ENCODE measurements at regions of chr19 and their contacts with region 1.

Region 1: GRCh38 chr19:45643024-45643926 is 4.1 kb upstream of the EML2 start:
- DNase-seq: no peak
- H3K4me3 ChIP-seq: no peak overlapping the region
- H3K27me3 ChIP-seq: no peaks in the 10 kb centered on the region
- CTCF ChIP-seq: peak; percentile 99

Region 2: DNA sequence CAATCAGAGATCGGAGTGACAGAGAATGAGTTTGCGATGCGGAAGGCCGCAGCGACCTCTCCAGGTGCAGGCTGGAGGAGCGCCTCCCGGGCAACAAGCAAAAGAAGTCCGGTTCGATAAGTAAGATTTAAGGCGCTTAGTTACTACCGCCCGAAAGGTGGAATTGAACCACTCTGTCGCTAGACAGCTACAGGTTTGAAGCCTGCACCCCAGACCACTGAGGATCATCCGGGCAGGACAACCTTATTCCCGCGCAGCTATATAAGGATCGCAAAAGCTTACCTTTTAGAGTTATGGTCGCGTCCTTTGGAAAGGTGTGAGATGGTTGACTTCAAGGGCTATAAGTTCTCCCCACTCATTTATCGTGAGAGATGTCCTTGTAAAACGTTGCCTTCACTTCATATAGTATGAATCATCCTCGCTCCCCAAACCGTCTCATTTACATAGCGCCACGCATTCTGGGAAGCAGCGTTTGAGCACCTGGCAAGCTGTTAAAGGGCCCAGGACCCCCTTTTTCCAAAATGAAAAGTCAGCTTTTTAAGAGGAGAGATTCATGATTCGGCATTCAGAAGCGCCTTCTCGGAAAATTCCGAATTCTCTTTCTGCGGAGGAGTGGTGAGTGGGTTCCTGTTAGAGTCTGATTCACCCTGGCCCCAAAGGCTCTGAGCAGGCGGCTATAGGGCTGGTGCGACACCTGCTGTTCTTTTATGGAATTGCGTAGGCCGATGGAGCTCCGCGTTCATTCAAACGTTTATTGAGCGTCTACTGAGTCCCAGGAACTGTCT is 164.6 kb before region 1 on chr19:
- CTCF ChIA-PET with region 1: interaction called, 24 read pairs
- POLR2A ChIA-PET with region 1: interaction called, 3 read pairs
- DNase-seq: no peak
- H3K4me3 ChIP-seq: peak overlapping the region; percentile 53
- H3K27me3 ChIP-seq: no peaks in the 10 kb centered on the region
- CTCF ChIP-seq: peak; percentile 93

Region 3: DNA sequence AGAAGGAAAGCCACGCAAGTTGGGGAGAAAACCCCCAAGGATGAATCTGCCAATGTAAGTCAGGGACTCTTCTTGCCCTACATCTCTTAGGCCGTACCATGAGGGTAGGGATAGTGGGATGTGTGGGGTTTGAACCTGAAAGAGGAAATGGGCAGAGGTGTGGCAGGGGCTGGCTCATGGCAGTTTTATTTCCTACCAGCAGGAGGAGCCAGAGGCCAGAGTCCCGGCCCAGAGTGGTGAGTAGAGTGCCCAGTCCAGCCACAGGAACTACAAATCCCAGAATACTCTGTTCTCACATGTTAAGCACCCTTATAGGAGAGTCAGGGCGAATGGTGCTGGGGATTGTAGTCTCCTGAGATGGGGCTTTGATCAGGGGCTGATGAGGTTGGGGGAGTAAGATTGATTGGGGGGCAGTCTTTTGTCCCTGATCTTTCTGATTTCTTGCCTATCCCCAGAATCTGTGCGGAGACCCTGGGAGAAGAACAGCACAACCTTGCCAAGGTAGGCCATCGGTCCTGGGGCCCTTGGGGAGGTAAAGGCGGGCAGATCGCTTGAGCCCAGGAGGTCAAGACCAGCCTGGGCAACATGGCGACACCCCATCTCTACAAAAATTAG is 119.5 kb before region 1 on chr19:
- CTCF ChIA-PET with region 1: interaction called, 10 read pairs
- POLR2A ChIA-PET with region 1: no interaction called
- DNase-seq: no peak
- H3K4me3 ChIP-seq: no peak overlapping the region
- H3K27me3 ChIP-seq: no peaks in the 10 kb centered on the region
- CTCF ChIP-seq: peak; percentile 85

Region 4: DNA sequence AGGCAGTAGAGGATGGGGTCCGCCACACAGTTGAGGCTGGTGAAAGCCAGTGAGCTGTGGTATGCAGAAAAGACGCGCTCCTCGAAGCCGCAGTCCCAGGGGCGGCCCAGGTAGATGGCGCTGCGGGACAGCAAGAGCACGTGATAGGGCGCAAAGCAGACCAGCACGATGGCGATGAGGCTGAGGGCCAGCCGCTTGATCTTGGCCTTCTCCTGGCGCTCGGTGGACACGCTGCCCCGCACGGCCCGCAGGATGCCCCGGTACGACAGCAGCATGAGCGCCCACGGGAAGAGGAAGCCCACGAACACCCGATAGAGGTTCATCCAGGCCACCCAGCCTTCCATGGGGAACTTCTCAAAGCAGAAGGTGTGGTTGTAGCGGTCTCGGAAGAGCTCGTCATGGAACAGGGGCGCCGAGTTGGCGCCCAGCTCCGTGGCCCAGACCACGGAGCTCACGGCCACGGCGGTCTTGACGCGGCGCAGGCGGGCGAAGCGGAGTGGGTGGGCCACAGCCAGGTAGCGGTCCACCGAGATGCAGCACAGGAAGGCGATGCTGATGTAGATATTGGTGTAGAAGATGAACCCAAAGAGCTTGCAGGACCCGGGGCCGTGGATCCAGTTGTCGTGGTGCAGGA is 52.2 kb before region 1 on chr19:
- CTCF ChIA-PET with region 1: interaction called, 37 read pairs
- POLR2A ChIA-PET with region 1: no interaction called
- DNase-seq: no peak
- H3K4me3 ChIP-seq: no peak overlapping the region
- H3K27me3 ChIP-seq: no peaks in the 10 kb centered on the region; the same call in 1 of the 2 replicates
- CTCF ChIP-seq: peak; percentile 62

Region 5: GRCh38 chr19:45615795-45616708 is 27.2 kb before region 1 on chr19:
- CTCF ChIA-PET with region 1: interaction called, 47 read pairs
- POLR2A ChIA-PET with region 1: no interaction called
- DNase-seq: no peak
- H3K4me3 ChIP-seq: no peak overlapping the region
- H3K27me3 ChIP-seq: no peaks in the 10 kb centered on the region
- CTCF ChIP-seq: no peak

Region 6: GRCh38 chr19:45701676-45702075 is 58.4 kb after region 1 on chr19:
- CTCF ChIA-PET with region 1: no interaction called
- POLR2A ChIA-PET with region 1: no interaction called
- DNase-seq: no peak
- H3K4me3 ChIP-seq: no peak overlapping the region
- H3K27me3 ChIP-seq: no peaks in the 10 kb centered on the region
- CTCF ChIP-seq: no peak

Measured in BJ (cell line).